PC-9 (cell line): ENCODE measurements at regions of chr19 and their contacts with region 1.

Region 1: GRCh38 chr19:36363845-36364244 is 15.2 kb downstream of the ZFP14 start:
- DNase-seq: no peak
- H3K4me3 ChIP-seq: no peak overlapping the region
- H3K27ac ChIP-seq: no peak overlapping the region
- H3K4me1 ChIP-seq: no peaks in the 10 kb centered on the region
- H3K27me3 ChIP-seq: no peaks in the 10 kb centered on the region
- CTCF ChIP-seq: no peak

Region 2: DNA sequence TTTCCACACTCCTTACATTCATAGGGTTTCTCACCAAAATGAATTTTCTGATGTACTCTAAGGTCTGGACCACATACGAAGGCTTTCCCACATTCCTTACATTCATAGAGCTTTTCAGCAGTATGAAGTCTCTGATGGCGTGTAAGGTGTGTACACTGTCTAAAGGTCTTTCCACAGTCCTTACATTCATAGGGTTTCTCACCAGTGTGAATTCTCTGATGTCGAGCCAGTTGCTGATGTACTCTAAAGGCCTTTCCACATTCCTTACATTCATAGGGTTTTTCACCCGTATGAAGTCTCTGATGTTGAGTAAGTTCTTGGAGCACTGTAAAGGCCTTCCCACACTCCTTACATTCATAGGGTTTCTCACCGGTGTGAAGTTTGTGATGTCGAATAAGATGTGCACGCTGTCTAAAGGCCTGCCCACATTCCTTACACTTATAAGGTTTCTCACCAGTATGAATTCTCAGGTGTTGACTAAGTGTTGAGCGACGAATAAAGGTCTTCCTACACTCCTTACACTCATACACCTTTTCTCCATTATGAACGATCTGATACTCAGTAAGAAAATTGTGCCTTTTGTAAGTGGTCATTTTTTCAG is 23.0 kb before region 1 on chr19:
- CTCF ChIA-PET with region 1: no interaction called
- POLR2A ChIA-PET with region 1: no interaction called
- intact Hi-C with region 1: loop called (anchors 1 kb)
- DNase-seq: no peak
- H3K4me3 ChIP-seq: no peak overlapping the region
- H3K27ac ChIP-seq: no peak overlapping the region
- H3K4me1 ChIP-seq: no peaks in the 10 kb centered on the region
- H3K27me3 ChIP-seq: no peaks in the 10 kb centered on the region
- CTCF ChIP-seq: no peak